ENCODE measurements at regions of chr13 and their contacts with region 1.

Region 1: DNA sequence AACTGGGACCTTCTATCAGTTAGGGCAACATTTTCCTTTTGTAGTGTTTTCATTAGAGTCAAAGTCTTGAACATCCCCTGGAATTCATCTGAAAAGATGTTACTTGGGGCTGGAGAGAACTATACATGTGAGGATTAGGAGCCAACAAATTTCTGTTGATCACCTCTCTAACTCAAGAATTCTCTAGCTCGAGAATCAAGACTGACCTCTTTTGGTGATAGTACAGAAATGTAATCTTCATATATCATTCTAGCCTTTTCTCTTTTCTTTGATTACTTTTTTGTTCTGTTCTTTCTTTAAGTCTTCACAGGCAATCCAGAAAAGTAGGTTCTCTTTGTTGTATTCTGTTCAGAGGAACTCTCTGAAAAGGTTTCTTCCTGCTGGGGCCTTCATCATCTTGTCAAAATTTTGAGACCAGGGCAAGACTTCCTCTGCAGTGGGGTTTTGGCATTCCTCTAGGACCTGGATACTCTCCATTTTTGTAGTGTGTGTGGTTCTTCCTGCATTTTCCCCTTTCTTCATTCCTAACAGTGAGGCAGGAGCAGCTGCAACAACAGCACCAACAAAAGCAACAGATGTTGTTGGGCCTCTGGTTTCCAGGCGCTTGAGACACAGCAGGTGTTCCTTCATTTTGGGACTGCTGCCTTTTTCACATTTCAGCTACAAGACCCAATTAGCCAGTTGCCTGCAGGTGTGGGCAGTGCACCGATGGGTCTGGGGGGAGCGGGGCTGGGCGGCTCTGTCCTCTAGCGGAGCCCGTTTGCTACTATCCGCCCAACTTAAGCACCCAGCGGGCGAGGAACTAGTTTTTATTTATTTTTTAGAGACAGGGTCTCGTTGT is 26.2 kb downstream of the ELF1 start:
- DNase-seq: no peak
- H3K4me3 Mint-ChIP-seq: no peak overlapping the region
- H3K27ac Mint-ChIP-seq: peak overlapping the region; percentile 61
- H3K4me1 Mint-ChIP-seq: peaks cover 79% of the 10 kb centered on the region
- H3K27me3 Mint-ChIP-seq: no peaks in the 10 kb centered on the region

Region 2: GRCh38 chr13:40060296-40061007 is 932.4 kb before region 1 on chr13:
- CTCF ChIA-PET with region 1: no interaction called
- POLR2A ChIA-PET with region 1: no interaction called
- DNase-seq: peak; percentile 24
- H3K4me3 Mint-ChIP-seq: no peak overlapping the region
- H3K27ac Mint-ChIP-seq: no peak overlapping the region
- H3K4me1 Mint-ChIP-seq: peaks cover 25% of the 10 kb centered on the region
- H3K27me3 Mint-ChIP-seq: no peaks in the 10 kb centered on the region

Region 3: GRCh38 chr13:41004875-41005693 is 12.2 kb after region 1 on chr13:
- CTCF ChIA-PET with region 1: interaction called, 6 read pairs
- POLR2A ChIA-PET with region 1: interaction called, 66 read pairs
- DNase-seq: no peak
- H3K4me3 Mint-ChIP-seq: peak overlapping the region; percentile 55
- H3K27ac Mint-ChIP-seq: peak overlapping the region; percentile 95
- H3K4me1 Mint-ChIP-seq: peaks cover 71% of the 10 kb centered on the region
- H3K27me3 Mint-ChIP-seq: no peaks in the 10 kb centered on the region

Region 4: DNA sequence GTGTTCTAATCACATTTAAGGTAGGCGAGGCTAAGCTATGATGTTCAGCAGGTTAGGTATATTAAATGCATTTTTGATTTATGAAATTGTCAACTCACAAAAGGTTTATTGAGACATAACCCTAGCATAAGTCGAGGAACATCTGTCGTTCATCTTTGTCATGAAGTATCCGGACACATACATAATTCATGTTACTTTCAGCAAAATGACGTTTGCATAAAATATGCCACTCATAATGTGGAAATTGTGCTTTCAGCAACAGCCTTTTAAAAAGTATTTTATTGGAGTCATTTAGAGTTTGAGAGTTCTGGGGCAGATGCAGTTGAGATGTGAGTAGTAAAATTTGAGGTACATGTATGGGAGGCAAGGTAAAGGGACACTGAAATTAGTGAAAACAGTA is 384.5 kb after region 1 on chr13:
- CTCF ChIA-PET with region 1: no interaction called
- POLR2A ChIA-PET with region 1: no interaction called
- DNase-seq: no peak
- H3K4me3 Mint-ChIP-seq: no peak overlapping the region
- H3K27ac Mint-ChIP-seq: no peak overlapping the region
- H3K4me1 Mint-ChIP-seq: no peaks in the 10 kb centered on the region
- H3K27me3 Mint-ChIP-seq: no peaks in the 10 kb centered on the region